ENCODE measurements at regions of chr12 and their contacts with region 1.

Region 1: GRCh38 chr12:57726151-57726883 is 12.2 kb downstream of the AGAP2 start:
- DNase-seq: peak; percentile 83 to 91
- H3K4me3 ChIP-seq: peak overlapping the region; percentile 55
- H3K4me3 Mint-ChIP-seq: peak overlapping the region; percentile 85
- H3K27ac Mint-ChIP-seq: peak overlapping the region; percentile 45
- H3K4me1 ChIP-seq: no peaks in the 10 kb centered on the region
- H3K4me1 Mint-ChIP-seq: no peaks in the 10 kb centered on the region
- H3K27me3 ChIP-seq: no peaks in the 10 kb centered on the region
- H3K27me3 Mint-ChIP-seq: peaks cover 12% of the 10 kb centered on the region
- CTCF ChIP-seq: peak; percentile 76 to 89

Region 2: DNA sequence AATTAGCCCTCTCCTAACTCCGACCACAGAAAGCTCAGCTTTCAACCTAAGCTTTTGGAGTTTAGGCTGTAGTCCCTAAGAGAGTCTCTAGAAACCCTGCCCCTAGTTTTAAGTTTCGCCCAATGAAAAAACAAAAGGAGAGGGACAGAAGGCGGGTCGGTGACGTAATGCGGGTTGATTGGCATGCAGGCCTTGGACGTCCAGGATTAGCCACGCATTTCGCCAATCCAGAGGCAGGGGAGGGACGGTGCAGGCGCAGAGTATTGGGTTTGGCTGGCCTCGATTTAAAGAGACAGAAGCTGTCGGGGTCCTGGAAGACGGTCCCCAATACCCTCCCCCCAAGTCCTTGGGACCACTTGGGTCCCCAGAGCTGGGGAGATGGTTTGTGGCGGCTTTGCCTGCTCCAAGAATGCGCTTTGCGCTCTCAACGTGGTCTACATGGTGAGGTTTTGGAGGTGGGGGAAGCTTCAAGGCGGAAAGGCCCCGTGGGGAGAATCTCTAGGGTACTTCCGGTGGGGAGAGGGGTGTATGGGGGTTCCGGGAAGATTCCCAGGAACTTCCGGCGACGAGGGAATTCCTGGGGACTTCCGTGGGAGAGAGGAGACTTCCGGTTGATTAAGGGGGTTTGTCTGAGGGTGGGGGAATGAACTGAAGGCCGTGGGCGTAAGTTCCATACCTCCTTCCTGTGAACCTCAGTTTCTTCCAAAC is 18.6 kb after region 1 on chr12 and contains the start of gene TSPAN31:
- CTCF ChIA-PET with region 1: interaction called, 10 read pairs
- POLR2A ChIA-PET with region 1: no interaction called
- intact Hi-C with region 1: no loop called
- DNase-seq: peak; percentile 95 to 97
- H3K4me3 ChIP-seq: peak within 1 kb of the TSS; percentile 64
- H3K4me3 Mint-ChIP-seq: peak within 1 kb of the TSS; percentile 96
- H3K27ac Mint-ChIP-seq: peak within 1 kb of the TSS; percentile 98
- H3K4me1 ChIP-seq: peaks cover 10% of the 10 kb centered on the region
- H3K4me1 Mint-ChIP-seq: peaks cover 19% of the 10 kb centered on the region
- H3K27me3 ChIP-seq: no peaks in the 10 kb centered on the region
- H3K27me3 Mint-ChIP-seq: peaks cover 6% of the 10 kb centered on the region
- CTCF ChIP-seq: no peak
- total RNA-seq, gene TSPAN31: 20.6 and 23.3 TPM in 2 replicates

Measured in Caco-2 (cell line).